ENCODE measurements at regions of chr19 and their contacts with region 1.

Region 1: DNA sequence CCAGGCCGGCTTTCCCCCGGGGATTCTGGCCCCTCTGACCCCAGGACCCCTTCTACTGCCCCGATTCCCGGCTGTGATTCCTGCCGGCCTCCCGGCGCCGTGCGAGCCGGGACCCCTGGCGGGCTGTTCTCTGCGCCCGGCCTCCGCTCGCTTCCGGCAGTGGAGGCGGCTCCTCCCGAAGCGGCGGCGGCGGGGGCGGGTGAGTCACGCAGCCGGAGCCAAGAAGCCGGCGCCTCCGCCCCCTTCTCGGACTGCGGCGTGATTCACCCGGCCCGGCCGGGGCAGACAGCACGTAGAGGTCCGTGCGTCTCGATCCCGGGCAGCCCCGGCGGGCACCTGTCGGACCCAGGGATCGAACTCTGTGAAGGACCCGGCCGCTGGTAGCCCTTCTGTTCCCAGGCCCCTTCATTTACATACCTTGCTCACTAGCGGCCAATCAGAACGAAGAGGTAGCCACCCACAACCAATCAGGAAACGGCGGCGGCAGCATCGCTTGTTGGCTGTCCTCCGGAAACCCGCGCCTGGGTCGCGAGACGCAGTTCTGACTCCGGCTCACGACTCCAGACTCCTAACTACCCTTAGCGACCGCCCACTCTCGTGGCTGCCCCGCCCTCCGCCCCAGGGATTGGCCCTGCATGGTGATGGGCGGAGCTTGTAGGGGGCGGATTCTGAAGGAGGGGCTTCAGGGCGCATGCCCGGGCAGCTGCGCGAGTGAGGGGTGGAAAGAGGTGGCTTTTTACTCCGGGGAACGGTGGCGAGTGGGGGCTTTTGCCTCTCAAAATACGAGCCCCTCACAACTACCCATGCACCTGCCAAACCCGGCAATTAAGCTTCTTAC is at the start of gene SERTAD1:
- DNase-seq: peak; percentile 97

Region 2: DNA sequence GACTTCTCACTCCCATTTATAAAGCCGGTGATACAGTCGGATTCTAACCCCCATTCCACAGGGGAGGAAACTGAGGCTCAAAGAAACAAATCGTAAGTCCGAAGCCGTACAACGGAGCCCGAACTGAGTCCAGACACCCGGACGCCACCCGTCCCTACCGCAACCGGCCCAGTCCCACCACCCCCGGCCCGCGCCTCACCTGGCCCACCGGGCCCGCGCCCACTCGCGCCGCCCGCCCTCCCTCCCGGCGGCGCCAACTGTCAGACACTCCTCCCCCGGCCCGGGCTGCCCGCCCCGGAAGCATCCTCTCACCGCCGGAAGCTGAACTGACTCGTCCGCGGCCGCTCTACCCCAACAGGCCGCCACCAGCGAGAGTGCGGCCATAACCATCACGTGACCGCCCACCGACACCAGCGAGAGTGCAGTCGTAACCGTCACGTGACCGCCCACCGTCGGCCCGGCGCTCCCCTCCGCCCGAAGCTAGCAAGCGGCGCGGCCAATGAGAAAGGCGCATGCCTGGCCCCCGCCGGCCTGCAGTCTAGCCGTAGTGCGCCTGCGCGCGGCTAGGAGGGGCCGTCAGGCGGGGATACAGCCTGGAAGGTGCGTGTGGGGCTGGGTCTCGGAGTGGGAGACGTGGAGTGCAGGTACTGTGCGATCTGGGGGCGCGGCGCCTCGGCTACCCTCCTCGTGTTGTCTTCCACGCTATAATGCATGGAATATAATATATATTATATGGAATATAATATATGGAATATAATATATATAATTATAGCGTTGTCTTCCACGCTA is 77.3 kb before region 1 on chr19 and contains the starts of genes C19orf47 and PLD3:
- CTCF ChIA-PET with region 1: no interaction called
- POLR2A ChIA-PET with region 1: interaction called, 10 read pairs
- DNase-seq: peak; percentile 100

Region 3: GRCh38 chr19:40403262-40403984 is 22.2 kb before region 1 on chr19:
- CTCF ChIA-PET with region 1: interaction called, 3 read pairs
- POLR2A ChIA-PET with region 1: interaction called, 17 read pairs
- DNase-seq: peak; percentile 96

Region 4: GRCh38 chr19:40411125-40411842 is 14.4 kb before region 1 on chr19:
- CTCF ChIA-PET with region 1: interaction called, 6 read pairs
- POLR2A ChIA-PET with region 1: interaction called, 12 read pairs
- DNase-seq: no peak

Region 5: DNA sequence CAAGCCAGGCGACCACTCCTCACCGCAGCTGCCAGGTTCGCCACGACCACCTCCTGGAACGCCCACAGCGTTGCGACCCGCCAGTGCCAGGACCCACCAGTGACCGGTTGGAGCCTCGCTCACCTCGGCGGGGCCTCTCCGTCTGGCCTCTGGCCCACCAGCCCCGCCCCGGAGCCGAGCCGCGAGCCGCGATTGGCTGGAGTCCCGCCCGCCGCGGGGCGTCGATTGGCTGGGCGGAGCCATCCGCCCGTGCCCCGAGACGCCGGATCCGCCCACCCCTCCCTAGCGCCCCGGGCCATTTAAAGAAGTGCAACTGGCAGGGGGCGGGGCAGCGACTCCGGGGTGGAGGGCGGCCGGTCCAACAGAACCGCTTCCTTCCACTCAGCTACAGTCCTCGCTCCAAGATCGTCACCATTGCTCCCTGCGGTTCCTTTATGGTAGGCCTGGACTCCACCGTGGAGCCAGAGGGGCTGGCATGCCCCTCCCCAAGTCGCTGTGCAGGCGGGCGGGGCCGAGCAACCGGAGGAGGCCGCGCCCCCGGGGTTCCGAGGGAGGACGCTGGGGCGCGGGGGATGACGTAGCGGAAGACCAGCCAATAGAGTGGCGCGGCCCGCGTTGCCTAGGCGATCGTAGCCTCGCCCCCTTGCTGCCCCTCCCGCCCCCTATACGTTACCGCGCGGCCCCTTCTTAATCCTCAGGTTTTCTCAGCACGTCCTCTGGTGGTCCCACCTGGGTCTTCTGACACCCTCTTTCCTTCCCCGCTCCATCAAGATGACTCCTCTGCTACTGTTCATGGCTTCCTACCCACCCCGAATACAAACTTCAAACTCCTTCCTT is 18.7 kb after region 1 on chr19 and contains the start of gene SERTAD3:
- CTCF ChIA-PET with region 1: interaction called, 5 read pairs
- POLR2A ChIA-PET with region 1: interaction called, 57 read pairs
- DNase-seq: peak; percentile 92